ENCODE measurements at regions of chr18 and their contacts with region 1.

Region 1: DNA sequence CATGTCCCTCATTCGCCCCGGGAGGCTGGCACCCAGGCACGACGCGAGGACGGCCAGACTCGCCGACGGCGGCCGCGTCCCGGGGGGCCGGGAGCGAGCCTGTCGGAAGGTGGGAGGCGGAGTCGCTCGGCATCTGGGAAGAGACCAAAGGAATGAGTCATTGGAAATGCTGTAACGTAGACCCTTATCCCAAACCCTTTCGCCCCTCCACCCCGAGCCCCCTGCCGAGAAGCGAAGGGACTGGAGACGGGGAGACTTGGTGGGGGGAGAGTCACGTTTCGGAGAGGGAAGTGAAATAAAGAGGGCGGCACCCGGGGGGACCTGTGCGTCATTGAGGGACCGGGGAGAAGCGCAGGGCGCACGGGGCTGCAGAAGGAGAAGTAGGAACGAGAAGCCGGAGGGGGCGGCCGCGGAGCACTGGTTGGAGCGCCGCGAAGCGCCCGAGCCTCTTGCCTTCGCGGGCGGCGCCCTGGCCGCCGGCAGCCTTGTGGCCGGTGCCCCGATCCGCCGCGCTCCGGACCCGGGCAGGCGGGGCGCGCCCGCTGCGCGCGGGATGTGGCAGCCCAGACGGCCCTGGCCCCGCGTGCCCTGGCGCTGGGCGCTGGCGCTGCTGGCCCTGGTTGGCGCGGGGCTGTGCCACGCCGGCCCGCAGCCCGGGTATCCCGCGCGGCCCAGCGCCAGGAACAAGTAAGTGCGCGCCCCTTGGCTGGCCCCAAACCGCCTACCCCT is at the start of gene EMILIN2:
- DNase-seq: peak; percentile 3
- H3K4me3 Mint-ChIP-seq: peak within 1 kb of the TSS; percentile 89
- H3K27ac Mint-ChIP-seq: peak within 1 kb of the TSS; percentile 82
- H3K4me1 Mint-ChIP-seq: peaks cover 26% of the 10 kb centered on the region
- H3K27me3 Mint-ChIP-seq: peaks cover 50% of the 10 kb centered on the region
- total RNA-seq, gene EMILIN2: 26.1 and 28.0 TPM in 2 replicates

Region 2: DNA sequence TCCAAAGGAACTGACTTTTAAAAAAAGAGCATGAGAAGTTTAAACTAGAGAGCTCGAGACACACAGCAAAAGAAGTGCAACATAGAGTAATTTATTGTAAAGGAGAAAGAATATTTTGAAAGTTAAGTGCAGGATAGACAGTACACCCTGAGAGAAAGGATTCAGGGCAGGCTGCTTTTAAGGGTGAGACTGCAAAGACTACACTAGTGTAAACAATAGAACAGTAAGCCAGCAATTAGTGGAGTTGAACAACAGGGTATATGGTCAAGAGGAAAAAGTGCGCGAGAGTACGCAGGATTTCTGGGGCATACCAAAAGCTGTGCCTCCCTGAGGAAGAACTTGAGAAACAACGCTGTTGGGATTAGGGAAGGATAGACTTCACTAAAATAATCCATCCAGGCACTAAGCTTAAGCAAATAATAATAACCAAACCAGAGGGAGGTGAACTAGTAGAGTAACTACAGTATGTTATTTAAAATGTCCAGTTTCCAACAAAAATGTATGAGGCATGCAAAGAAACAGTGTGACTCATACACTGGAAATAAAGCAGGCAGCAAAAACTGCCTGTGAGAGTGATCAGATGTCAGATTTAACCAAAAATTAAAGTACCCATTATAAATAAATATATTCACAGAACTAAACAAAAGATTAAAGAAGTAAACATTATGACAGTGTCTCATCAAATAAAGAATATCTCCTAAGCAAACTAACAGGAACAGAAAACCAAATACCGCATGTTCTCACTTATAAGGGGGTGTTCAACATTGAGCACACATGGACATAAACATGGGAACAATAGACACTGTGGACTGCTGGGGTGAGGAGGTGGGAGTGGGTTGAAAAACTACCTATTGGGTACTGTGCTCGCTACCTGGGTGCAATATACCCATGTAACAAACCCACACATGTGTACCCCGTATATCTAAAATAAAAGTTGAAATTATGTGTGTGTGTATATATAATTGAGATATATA is 40.5 kb before region 1 on chr18:
- intact Hi-C with region 1: loop called (anchors 5 kb)
- DNase-seq: no peak
- H3K4me3 Mint-ChIP-seq: no peak overlapping the region
- H3K27ac Mint-ChIP-seq: no peak overlapping the region
- H3K4me1 Mint-ChIP-seq: no peaks in the 10 kb centered on the region
- H3K27me3 Mint-ChIP-seq: no peaks in the 10 kb centered on the region

Region 3: GRCh38 chr18:2883076-2883735 is 36.4 kb after region 1 on chr18:
- intact Hi-C with region 1: loop called (anchors 2 kb)
- DNase-seq: peak; percentile 43
- H3K4me3 Mint-ChIP-seq: peak overlapping the region; percentile 48
- H3K27ac Mint-ChIP-seq: peak overlapping the region; percentile 89
- H3K4me1 Mint-ChIP-seq: peaks cover 30% of the 10 kb centered on the region
- H3K27me3 Mint-ChIP-seq: peaks cover 4% of the 10 kb centered on the region

Region 4: DNA sequence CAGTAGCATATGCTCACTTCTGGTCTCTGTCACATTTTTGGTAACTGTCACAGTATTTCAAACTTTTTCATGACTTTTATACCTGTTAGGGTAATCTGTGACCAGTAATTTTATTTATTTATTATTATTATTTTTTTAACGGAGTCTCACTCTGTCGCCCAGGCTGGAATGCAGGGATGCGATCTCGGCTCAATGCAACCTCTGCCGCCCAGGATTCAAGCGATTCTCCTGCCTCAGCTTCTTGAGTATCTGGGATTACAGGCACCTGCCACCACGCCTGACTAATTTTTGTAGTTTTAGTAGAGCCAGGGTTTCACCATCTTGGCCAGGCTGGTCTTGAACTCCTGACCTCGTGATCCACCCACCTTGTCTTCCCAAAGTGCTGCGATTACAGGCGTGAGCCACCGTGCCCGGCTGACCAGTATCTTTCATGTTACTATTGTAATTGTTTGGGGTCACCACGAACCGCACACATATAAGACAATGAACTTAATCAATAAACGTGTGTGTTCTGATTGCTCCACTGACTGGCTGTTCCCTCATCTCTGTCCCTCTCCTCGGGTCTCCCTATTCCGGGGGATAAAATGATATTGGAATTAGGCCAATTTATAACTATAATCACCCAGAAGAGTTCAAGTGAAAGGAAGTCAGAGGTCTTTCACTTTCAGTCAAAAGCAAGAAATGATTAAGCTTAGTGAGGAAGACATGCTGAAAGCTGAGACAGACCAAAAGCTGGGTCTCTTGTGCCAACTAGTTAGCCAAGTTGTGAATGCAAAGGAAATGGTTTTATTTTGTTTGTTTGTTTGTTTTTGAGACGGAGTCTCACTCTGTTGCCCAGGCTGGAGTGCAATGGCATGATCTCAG is 626.1 kb after region 1 on chr18:
- intact Hi-C with region 1: no loop called
- DNase-seq: no peak
- H3K4me3 Mint-ChIP-seq: no peak overlapping the region
- H3K27ac Mint-ChIP-seq: no peak overlapping the region
- H3K4me1 Mint-ChIP-seq: peaks cover 12% of the 10 kb centered on the region
- H3K27me3 Mint-ChIP-seq: no peaks in the 10 kb centered on the region

Measured in activated T-helper 1 cell treated with anti-CD3 and anti-CD28 coated beads, Interleukin-12 subunit alpha, Interleukin-12 subunit beta, Interleukin-2, Interleukin-4 antibody, amounts not matched to agents 30 ng/mL and 10 ng/mL and 1 ng/mL, durations not matched to agents 14 hours and 24 hours and 36 hours (primary cell).